ENCODE measurements at regions of chrX and their contacts with region 1.

Region 1: DNA sequence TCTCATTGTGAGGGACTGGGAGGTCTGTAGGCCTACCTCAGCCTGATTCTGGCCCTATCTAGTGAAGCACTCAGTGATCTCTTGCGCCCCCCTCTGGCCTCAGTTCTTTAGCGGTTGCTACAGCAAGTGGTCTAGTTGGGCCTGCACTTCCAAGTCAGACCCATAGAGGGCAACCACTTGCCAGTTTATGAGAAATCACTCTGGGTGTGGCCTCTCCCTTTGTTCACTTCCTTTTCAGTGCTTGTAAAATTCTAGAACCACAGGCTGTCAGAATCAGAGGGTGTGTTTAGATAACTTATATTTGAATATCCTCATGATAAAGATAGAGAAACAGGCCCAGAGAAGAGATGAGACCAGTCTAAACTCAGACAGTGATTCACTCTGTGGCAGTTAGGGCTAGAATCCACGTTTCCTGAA is 60.9 kb upstream of the LAS1L start:
- DNase-seq: peak; percentile 89
- ATAC-seq: peak; percentile 88
- H3K4me3 ChIP-seq: no peak overlapping the region
- H3K27ac ChIP-seq: peak overlapping the region; percentile 67
- H3K4me1 ChIP-seq: peaks cover 19% of the 10 kb centered on the region
- H3K27me3 ChIP-seq: no peaks in the 10 kb centered on the region
- CTCF ChIP-seq: peak; percentile 98 to 100 (median 99); a peak in 5 of 6 replicates
- EP300 ChIP-seq: no peak
- POLR2A ChIP-seq: no peak
- RAD21 ChIP-seq: peak; percentile 94

Region 2: DNA sequence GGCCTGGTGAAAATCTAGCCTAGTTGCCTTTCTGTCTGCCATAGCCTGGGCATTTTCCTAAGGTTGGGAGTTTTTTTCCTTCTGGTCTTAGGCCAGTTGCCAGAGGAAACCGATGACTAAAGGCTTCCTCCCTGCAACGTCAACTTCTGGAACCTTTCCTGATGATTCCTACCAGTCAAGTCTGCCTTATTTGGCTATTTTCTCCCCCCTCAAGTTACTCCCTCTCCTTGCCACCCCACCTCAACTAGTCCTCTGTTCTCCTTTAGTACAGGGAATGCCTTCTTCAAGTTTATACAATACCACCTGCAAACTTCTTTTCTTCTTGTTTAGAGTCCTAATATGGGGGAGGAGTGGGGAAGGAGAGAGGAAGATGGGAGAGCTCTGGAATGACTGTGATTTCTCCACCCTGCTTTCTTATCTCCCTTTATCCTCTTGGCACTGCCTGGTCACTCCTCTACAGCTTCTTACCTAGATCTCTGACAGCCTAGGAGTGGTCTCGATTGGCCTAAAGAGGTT is 82.5 kb after region 1 on chrX:
- CTCF ChIA-PET with region 1: interaction called, 5 read pairs
- POLR2A ChIA-PET with region 1: no interaction called
- RAD21 ChIA-PET with region 1: interaction called, 12 read pairs
- SMC1A ChIA-PET with region 1: no interaction called
- in situ Hi-C with region 1: no loop called
- intact Hi-C with region 1: no loop called
- DNase-seq: no peak
- ATAC-seq: no peak
- H3K4me3 ChIP-seq: peak overlapping the region; percentile 17; the same call in 1 of the 2 replicates
- H3K27ac ChIP-seq: peak overlapping the region; percentile 18; the same call in 1 of the 2 replicates
- H3K4me1 ChIP-seq: peaks cover 11% of the 10 kb centered on the region
- H3K27me3 ChIP-seq: no peaks in the 10 kb centered on the region
- CTCF ChIP-seq: no peak
- EP300 ChIP-seq: no peak
- POLR2A ChIP-seq: no peak
- RAD21 ChIP-seq: no peak

Region 3: DNA sequence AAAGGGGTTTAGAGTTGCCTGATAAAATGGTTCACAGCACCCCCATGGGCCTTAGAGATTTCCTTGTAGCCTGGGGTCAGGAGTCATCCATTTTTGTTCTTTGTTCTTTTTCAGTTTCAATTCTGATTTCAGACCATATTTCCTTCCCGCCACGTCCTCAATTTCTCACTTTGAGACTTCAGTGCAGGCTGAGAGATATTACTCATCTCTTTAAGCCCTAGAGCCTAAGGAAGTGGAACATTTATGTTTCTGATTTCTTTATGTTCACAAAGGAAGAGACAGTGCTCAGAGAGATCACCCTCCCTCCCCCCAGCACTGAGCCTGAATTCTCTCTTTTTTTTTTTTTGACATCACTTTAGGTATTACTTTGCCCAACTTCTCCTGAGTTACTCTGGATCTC is 128.2 kb after region 1 on chrX:
- CTCF ChIA-PET with region 1: interaction called, 15 read pairs
- POLR2A ChIA-PET with region 1: interaction called, 9 read pairs
- RAD21 ChIA-PET with region 1: interaction called, 32 read pairs
- SMC1A ChIA-PET with region 1: interaction called, 17 read pairs
- in situ Hi-C with region 1: loop called (anchors 5 kb)
- intact Hi-C with region 1: loop called (anchors 1 kb)
- DNase-seq: peak; percentile 74
- ATAC-seq: peak; percentile 80
- H3K4me3 ChIP-seq: no peak overlapping the region
- H3K27ac ChIP-seq: peak overlapping the region; percentile 78
- H3K4me1 ChIP-seq: peaks cover 13% of the 10 kb centered on the region
- H3K27me3 ChIP-seq: no peaks in the 10 kb centered on the region
- CTCF ChIP-seq: no peak
- EP300 ChIP-seq: peak in 1 of 2 experiments; percentile 70; a peak in 2 of 4 replicates
- POLR2A ChIP-seq: no peak
- RAD21 ChIP-seq: no peak

Region 4: DNA sequence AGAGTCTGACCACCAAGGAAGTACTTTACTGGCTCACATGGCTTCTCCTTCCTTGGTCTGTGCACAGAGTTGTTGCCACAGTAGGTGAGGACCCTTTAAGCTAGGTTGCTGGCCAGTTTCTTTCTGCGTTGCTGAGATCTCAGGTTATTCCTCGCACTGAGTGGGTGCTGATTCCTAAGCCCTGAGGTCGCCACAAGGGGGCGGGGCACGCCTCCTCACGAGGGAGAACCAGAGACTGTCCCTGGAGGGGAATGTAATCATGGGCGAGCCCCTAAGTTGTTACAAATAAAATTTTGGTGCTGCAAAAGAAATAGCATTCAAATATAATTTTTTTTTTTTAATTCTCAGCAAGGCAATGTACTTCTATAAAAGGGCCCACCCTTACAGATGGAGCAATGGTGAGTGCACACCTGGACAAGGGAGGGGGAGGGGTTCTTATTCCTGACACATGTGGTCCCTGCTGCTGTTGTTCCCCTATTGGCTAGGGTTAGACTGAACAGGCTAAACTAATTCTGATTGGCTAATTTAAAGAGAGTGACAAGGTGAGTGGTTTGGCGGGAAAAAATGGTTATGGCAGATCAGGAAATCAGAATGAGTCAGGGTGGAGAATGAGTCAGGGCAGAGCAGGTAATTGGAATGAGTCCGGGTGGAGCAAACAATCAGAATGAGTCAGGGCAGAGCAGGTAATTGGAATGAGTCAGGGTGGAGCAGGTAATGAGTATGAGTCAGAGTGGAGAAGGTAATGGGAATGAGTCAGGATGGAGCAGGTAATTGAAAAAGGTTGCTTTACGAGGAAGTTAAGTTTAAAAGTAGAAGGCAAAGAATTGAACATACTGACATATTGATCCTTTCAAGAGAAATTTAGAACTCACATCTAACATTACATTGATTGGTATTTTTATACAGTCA is 337.0 kb after region 1 on chrX:
- CTCF ChIA-PET with region 1: no interaction called
- POLR2A ChIA-PET with region 1: interaction called, 10 read pairs
- RAD21 ChIA-PET with region 1: no interaction called
- SMC1A ChIA-PET with region 1: no interaction called
- in situ Hi-C with region 1: no loop called
- intact Hi-C with region 1: no loop called
- DNase-seq: no peak
- ATAC-seq: peak; percentile 39; the same call in 1 of the 3 replicates
- H3K4me3 ChIP-seq: no peak overlapping the region
- H3K27ac ChIP-seq: no peak overlapping the region
- H3K4me1 ChIP-seq: no peaks in the 10 kb centered on the region
- H3K27me3 ChIP-seq: no peaks in the 10 kb centered on the region
- CTCF ChIP-seq: peak; percentile 3 to 15 (median 4); a peak in 1 of 6 replicates
- EP300 ChIP-seq: no peak
- POLR2A ChIP-seq: no peak
- RAD21 ChIP-seq: no peak

Region 5: GRCh38 chrX:66408507-66408906 is 813.0 kb after region 1 on chrX:
- CTCF ChIA-PET with region 1: no interaction called
- POLR2A ChIA-PET with region 1: no interaction called
- RAD21 ChIA-PET with region 1: interaction called, 3 read pairs
- SMC1A ChIA-PET with region 1: no interaction called
- in situ Hi-C with region 1: no loop called
- intact Hi-C with region 1: loop called (anchors 5 kb)
- DNase-seq: peak; percentile 11
- ATAC-seq: peak; percentile 79
- H3K4me3 ChIP-seq: no peak overlapping the region
- H3K27ac ChIP-seq: no peak overlapping the region
- H3K4me1 ChIP-seq: no peaks in the 10 kb centered on the region
- H3K27me3 ChIP-seq: no peaks in the 10 kb centered on the region
- CTCF ChIP-seq: peak; percentile 46 to 56 (median 49); a peak in 4 of 6 replicates
- EP300 ChIP-seq: no peak
- POLR2A ChIP-seq: no peak
- RAD21 ChIP-seq: peak; percentile 57